ENCODE measurements at regions of chr6 and their contacts with region 1.

Region 1: GRCh38 chr6:6927521-6928371 is 180.0 kb upstream of the RREB1 start:
- DNase-seq: peak; percentile 73 to 90
- ATAC-seq: peak; percentile 76 to 79
- H3K4me3 ChIP-seq: peak overlapping the region; percentile 35 to 53 (median 47)
- H3K27ac ChIP-seq: peak overlapping the region; percentile 92 to 97 (median 96)
- H3K4me1 ChIP-seq: peaks cover 32 to 57% of the 10 kb centered on the region in 2 donors
- H3K27me3 ChIP-seq: no peaks in the 10 kb centered on the region
- CTCF ChIP-seq: peak in 4 of 5 experiments; percentile 23 to 52 (median 44)
- POLR2A ChIP-seq: peak; percentile 31 to 39

Region 2: DNA sequence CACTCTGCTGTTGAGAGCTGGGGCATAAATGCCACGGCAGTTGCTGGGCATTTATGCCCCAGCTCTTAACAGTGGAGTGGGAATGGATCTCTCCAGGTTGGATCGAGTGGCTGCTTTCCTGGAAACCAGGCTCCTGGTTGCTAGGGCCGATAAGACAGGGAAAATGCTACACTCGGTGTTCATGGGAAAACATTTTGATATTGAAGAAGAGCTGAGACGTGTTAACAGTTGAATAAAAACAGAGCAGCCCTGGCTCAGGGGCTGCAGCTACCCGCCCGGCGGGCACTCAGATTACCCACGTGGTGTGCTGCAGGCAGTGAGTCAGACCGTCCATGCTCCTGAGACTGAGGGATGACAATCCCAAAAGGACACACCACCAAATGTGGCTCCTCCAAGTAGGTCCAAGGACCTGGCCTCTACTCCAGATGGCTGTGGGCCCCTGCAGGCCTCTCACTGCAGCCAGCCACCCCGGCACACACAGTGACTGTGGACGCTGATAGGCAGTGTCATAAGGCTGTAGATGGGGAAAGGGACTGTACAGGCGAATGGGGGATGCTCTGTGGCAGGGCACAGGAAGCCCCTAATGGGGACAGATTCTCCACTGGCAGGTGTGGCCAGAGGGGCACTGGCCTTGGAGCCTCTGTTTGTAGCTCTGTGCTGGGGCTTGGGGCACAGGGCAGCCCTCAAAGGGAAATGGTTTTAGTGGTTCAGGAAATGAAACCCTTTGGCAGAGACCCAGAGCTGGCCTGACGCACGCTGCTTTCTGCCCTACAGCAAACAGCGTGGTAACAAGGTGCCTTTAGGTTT is 101.4 kb before region 1 on chr6:
- in situ Hi-C with region 1: no loop called
- intact Hi-C with region 1: loop called (anchors 5 kb)
- DNase-seq: peak; percentile 88 to 95
- ATAC-seq: peak; percentile 73 to 82
- H3K4me3 ChIP-seq: peak overlapping the region; percentile 32 to 50 (median 39)
- H3K27ac ChIP-seq: peak overlapping the region; percentile 95 to 98 (median 98)
- H3K4me1 ChIP-seq: peaks cover 25 to 31% of the 10 kb centered on the region in 2 donors
- H3K27me3 ChIP-seq: no peaks in the 10 kb centered on the region
- CTCF ChIP-seq: no peak
- POLR2A ChIP-seq: peak; percentile 59 to 70

Region 3: DNA sequence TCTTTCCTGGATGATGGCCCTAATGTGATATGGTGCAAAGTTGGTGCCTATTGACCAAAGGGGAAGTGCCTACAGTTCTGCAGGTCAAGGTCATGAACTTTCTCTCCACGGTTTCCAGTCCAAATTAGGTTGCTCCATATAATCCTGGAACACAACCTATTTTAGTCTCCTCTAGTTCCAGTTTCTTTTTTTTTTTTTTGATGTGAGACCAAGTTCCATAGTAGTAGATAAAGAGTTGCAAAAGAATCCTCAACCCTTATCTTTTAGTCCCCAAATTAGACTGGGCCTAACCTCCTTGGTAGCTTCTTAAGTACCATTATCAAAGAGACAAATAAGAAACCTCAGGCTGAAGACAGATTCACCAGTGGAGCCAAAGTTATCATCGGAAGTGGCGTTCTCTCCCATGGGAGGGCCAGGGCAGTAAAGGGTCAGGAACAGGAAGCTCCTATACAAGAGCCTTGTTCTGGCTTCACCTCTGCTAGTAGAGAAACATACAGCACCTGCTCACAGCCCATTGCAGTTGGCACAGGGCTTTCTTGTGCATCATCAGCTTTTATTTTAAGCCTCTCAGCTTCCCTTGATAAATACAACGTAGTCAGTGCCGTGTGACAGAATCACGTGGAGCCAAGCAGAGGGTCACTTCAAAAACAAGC is 47.8 kb after region 1 on chr6:
- in situ Hi-C with region 1: no loop called
- intact Hi-C with region 1: loop called (anchors 2 kb)
- DNase-seq: peak; percentile 82 to 86
- ATAC-seq: peak; percentile 95 to 96
- H3K4me3 ChIP-seq: no peak overlapping the region
- H3K27ac ChIP-seq: peak overlapping the region; percentile 82 to 93 (median 82)
- H3K4me1 ChIP-seq: peaks cover 18 to 28% of the 10 kb centered on the region in 2 donors
- H3K27me3 ChIP-seq: no peaks in the 10 kb centered on the region
- CTCF ChIP-seq: no peak
- POLR2A ChIP-seq: no peak

Region 4: DNA sequence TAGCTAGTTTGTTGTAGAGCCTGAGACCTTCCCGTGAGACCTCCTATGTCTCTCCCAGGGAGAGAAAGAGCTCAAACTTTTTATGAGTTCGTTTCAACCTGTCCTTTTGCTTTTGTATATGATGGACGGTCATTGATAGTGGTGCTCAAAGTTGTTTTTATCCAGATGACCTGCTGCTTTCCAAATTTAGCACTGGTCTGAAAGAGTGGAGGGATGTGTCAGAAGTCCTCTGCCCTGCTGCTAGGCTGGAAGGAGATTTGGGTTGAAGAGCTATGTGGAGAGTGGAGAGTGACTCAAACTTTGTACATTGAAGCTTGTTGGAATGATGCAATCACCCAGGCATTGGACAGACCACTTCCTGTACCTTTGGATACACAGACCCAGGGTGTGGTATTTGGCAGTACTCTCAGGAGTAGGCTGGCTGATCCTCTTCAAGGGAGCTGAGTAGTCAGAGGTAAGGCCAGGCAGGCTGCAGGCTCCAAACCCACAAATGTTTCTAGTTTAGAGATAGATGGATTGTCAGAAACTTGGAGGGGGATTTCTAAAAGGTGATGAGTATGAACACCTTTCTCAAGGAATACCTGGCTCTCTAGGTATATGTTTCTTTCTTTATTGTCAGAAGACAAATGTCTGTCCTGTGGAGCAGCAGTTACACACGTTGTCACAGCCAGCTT is 130.6 kb after region 1 on chr6:
- in situ Hi-C with region 1: no loop called
- intact Hi-C with region 1: loop called (anchors 5 kb)
- DNase-seq: peak; percentile 89 to 92
- ATAC-seq: peak; percentile 98
- H3K4me3 ChIP-seq: peak overlapping the region in 3 of 4 donors; percentile 19 to 28 (median 23)
- H3K27ac ChIP-seq: peak overlapping the region; percentile 91 to 97 (median 94)
- H3K4me1 ChIP-seq: peaks cover 12 to 16% of the 10 kb centered on the region in 2 donors
- H3K27me3 ChIP-seq: no peaks in the 10 kb centered on the region
- CTCF ChIP-seq: no peak
- POLR2A ChIP-seq: peak; percentile 63 to 67

Region 5: DNA sequence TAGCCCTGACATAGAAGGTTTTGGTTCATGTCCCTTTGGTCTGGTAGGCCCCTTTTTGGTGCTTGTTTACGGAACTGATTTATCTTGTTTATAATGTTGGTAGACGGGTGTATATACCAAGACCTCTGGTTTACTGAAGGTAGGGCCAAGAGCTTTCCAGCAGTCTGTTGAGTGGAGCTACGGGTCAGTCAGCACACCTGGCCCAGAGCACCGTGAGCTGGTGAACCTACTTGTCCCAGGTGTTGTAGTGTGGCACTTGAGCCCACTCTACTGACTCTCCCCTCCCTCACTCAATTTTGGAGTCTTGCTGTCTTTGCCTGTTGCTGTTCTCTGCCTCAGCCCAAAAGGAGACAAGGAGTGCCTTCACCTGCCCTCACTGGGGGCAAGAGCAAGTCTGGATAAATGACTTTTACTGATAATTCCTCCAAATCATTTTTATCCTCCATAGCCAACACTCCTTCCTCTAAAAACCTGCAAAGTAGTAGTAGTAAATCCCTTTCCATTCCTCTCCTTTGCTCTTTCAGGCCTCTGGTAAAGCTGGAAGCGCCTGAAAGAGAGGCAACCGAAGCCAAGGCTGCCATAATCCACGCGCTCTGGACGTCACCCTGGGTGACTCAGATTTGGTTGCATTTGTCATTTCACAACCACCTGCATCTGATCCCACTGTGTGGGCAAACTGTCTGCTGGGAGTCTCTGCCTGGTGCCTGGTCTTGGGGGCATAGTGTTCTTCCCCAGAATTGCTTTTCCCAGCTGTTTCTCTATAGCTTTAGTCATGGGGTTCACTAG is 202.2 kb after region 1 on chr6:
- in situ Hi-C with region 1: no loop called
- intact Hi-C with region 1: loop called (anchors 5 kb)
- DNase-seq: peak; percentile 81 to 91
- ATAC-seq: peak; percentile 98
- H3K4me3 ChIP-seq: no peak overlapping the region
- H3K27ac ChIP-seq: peak overlapping the region; percentile 87 to 96 (median 90)
- H3K4me1 ChIP-seq: peaks cover 51 to 61% of the 10 kb centered on the region in 2 donors
- H3K27me3 ChIP-seq: no peaks in the 10 kb centered on the region
- CTCF ChIP-seq: no peak
- POLR2A ChIP-seq: no peak

Region 6: GRCh38 chr6:7238900-7239589 is 311.3 kb after region 1 on chr6:
- in situ Hi-C with region 1: loop called in 3 of 4 experiments (anchors 25 kb)
- intact Hi-C with region 1: loop called (anchors 5 kb)
- DNase-seq: peak; percentile 82 to 95
- ATAC-seq: peak; percentile 63 to 82
- H3K4me3 ChIP-seq: no peak overlapping the region
- H3K27ac ChIP-seq: peak overlapping the region; percentile 63 to 75 (median 66)
- H3K4me1 ChIP-seq: peaks cover 32 to 37% of the 10 kb centered on the region in 2 donors
- H3K27me3 ChIP-seq: no peaks in the 10 kb centered on the region
- CTCF ChIP-seq: peak; percentile 73 to 80 (median 77)
- POLR2A ChIP-seq: no peak

Measured in gastrocnemius medialis (tissue), 4 donors.